Common myeloid progenitor, CD34-positive (primary cell): ENCODE measurements at regions of chr9 and their contacts with region 1.

Region 1: DNA sequence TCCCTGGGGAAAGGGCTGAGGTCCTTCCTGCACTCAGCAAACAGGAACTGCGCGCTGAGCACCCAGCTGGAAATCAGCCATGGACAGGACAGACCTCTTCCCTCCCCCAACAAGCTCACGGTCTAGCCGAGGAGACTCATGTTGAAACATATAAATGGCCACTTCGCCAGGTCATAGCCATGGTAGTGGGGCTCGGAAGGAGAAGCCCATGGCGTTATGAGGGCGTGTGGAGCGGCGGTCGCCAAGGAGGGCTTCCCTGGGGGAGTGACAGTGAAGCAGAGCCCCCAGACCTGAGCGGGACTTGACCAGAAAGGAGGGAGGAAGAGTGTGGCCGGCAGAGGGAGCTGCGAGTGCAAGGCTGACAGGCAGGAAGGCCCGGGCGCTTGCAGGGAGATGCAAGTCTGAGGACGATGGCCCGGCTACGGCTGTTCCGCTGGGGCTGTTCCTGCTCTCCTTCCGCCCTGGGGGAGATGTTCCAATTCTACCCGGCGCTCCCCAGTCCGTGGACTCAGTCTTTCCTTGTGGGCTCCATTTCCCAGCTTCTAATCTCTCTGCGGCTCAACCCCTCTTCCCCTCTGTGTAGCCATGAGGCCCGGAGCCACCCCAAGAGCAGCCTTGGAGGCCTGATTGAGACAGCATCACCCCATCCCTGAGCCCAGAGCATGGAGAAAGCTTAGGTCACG is 43.9 kb upstream of the PRRC2B start:
- DNase-seq: peak; percentile 82 to 86 (median 85)
- H3K4me3 ChIP-seq: peak overlapping the region in 5 of 7 experiments; percentile 24 to 77 (median 53)
- H3K27ac ChIP-seq: no peak overlapping the region
- H3K4me1 ChIP-seq: peaks cover 0 to 21% (median 10%) of the 10 kb centered on the region in 4 experiments
- H3K27me3 ChIP-seq: no peaks in the 10 kb centered on the region

Region 2: GRCh38 chr9:131334629-131335367 is 15.2 kb before region 1 on chr9:
- CTCF ChIA-PET with region 1: interaction called, 15 read pairs
- POLR2A ChIA-PET with region 1: no interaction called
- DNase-seq: peak in 2 of 3 donors; percentile 66 to 81
- H3K4me3 ChIP-seq: peak overlapping the region in 1 of 7 experiments; percentile 11
- H3K27ac ChIP-seq: no peak overlapping the region
- H3K4me1 ChIP-seq: peaks cover 0 to 38% (median 23%) of the 10 kb centered on the region in 4 experiments
- H3K27me3 ChIP-seq: no peaks in the 10 kb centered on the region

Region 3: DNA sequence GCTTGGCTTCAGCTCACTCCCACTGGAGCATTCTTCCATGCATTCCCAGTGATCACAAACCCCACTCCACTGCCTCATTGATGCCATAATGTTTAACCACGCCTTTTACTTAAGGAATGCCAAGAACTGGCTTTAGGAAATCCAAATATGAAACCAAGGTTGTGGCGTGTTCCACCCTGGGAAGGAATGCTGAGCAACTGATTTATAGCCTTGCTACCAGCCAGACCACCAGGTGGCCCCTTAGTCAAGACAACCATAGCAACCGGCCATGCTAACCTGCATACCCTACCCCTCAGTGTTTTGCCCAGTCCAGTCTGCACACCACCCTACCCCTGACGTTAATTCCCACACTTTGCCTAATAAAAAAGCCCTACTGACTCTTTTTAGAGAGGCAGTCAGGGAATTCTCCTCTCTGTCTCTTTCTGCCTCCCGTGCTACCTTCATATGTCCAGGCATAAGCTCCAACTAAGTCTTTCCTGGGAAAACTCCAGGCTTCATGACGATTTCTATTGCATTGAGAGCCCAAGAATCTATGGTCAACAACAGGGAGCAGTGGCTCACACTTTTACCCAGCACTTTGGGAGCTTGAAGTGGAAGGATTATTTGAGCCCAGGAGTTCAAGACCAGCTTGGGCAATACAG is 16.9 kb after region 1 on chr9:
- CTCF ChIA-PET with region 1: interaction called, 14 read pairs
- POLR2A ChIA-PET with region 1: no interaction called
- DNase-seq: peak in 2 of 3 donors; percentile 30 to 32
- H3K4me3 ChIP-seq: no peak overlapping the region
- H3K27ac ChIP-seq: no peak overlapping the region
- H3K4me1 ChIP-seq: peaks cover 0 to 8% (median 1%) of the 10 kb centered on the region in 4 experiments
- H3K27me3 ChIP-seq: no peaks in the 10 kb centered on the region

Region 4: DNA sequence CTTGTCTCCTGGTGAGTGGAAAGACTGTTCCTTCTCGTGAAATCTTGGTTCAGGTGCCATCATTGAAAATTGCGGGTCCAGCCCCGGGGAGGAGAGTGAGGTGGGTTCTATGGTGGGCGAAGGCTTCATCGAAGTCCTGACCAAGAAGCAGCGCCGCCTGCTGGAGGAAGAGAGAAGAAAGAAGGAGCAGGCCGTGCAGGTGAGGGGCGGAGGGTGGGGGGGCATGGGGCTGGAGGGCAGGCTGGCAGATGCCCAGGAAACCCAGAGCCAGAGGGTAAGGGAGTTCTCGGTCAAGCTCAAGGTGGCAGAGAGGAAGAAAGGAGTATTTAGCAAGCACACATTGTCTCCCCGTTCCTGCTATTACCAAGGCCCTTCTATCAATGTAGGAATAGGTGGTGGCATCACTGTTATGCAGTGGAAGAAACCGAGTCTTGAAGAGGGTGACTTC is 128.4 kb after region 1 on chr9:
- CTCF ChIA-PET with region 1: interaction called, 29 read pairs
- POLR2A ChIA-PET with region 1: no interaction called
- DNase-seq: peak; percentile 44 to 66 (median 58)
- H3K4me3 ChIP-seq: no peak overlapping the region
- H3K27ac ChIP-seq: no peak overlapping the region
- H3K4me1 ChIP-seq: no peaks in the 10 kb centered on the region
- H3K27me3 ChIP-seq: no peaks in the 10 kb centered on the region

Region 5: GRCh38 chr9:131502781-131503625 is 153.0 kb after region 1 on chr9 and contains the start of gene POMT1:
- CTCF ChIA-PET with region 1: no interaction called
- POLR2A ChIA-PET with region 1: no interaction called
- DNase-seq: peak; percentile 84 to 87 (median 87)
- H3K4me3 ChIP-seq: peak within 1 kb of the TSS; percentile 60 to 91 (median 81)
- H3K27ac ChIP-seq: peak within 1 kb of the TSS in 1 of 2 experiments; percentile 66
- H3K4me1 ChIP-seq: peaks cover 0 to 31% (median 20%) of the 10 kb centered on the region in 4 experiments
- H3K27me3 ChIP-seq: no peaks in the 10 kb centered on the region